Esophagus muscularis mucosa (tissue), 4 donors: ENCODE measurements at regions of chr2 and their contacts with region 1.

Region 1: DNA sequence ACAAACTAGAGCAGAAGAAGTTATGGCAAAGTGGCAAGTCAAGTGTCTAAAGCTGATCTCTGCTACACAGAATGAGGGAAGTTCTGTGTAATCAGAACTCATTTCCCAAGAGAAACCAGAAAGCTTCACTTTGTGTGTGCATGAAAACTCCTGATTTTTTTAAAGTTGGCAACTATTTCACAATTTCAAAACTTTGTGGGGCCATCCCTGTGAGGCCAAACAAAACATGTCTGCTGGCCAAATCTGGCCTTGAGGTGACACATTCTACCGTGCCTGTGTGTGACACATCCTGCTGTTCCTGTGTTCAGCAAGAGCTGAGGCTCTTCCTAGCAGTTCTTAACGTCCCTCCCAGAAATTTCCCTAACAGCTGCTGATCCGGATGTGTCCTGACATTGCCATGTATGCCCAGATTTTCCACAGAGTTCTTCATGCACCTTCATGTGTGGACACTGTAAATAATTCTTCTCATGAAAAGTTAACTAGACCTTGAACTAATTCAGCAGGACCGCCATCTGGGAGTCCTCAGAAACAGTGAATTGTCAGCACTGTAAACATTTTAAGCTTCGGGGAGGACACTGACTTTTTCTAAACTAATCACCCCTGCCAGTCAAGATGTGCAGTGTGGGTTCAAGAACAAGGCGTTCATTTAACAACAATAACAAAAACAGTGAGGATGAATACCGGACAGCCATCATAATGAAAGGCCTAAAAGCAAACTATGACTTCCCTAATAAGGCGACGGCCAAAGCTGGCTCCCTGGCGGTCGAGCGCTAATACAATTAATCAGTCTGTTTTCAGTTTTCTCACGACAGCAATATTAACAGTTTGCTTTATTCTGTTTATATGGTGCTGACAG is 99.0 kb downstream of the PLEKHM3 start:
- DNase-seq: peak; percentile 93
- H3K4me3 ChIP-seq: peak overlapping the region; percentile 1 to 26 (median 23)
- H3K27ac ChIP-seq: peak overlapping the region; percentile 72 to 80 (median 74)
- H3K4me1 ChIP-seq: peaks cover 13 to 36% (median 33%) of the 10 kb centered on the region in 4 donors
- H3K27me3 ChIP-seq: no peaks in the 10 kb centered on the region
- CTCF ChIP-seq: no peak
- EP300 ChIP-seq: peak; percentile 1
- POLR2A ChIP-seq: no peak

Region 2: DNA sequence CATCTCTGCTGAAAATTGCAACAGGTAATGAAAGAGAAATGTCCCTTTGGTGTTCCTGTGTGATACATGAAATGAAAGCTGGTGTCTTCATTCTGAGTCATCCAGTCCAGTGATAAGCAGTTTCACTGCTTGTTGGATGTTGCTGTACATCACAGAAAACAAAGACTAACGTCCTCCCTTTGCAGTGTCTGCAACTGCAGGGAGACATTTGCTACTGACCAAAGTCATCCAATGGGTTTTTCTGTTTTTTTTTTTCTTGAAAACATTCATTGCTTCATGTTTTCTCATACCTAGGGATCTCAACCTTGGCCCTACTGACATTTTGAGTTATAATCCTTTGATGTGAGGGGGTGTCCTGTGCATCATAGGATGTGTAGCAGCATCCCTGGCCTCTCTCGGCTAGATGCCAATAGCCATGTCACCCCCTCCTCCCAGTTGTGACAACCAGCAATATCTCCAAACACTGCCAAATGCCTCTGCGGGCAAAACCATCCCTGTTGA is 93.1 kb before region 1 on chr2:
- intact Hi-C with region 1: loop called (anchors 10 kb)
- DNase-seq: no peak
- H3K4me3 ChIP-seq: no peak overlapping the region
- H3K27ac ChIP-seq: no peak overlapping the region
- H3K4me1 ChIP-seq: peaks cover 21 to 32% (median 27%) of the 10 kb centered on the region in 4 donors
- H3K27me3 ChIP-seq: no peaks in the 10 kb centered on the region
- CTCF ChIP-seq: no peak
- EP300 ChIP-seq: no peak
- POLR2A ChIP-seq: no peak

Region 3: GRCh38 chr2:207993151-207993763 is 66.9 kb after region 1 on chr2:
- intact Hi-C with region 1: no loop called
- DNase-seq: no peak
- H3K4me3 ChIP-seq: no peak overlapping the region
- H3K27ac ChIP-seq: no peak overlapping the region
- H3K4me1 ChIP-seq: peaks cover 0 to 8% (median 5%) of the 10 kb centered on the region in 4 donors
- H3K27me3 ChIP-seq: no peaks in the 10 kb centered on the region
- CTCF ChIP-seq: no peak
- EP300 ChIP-seq: no peak
- POLR2A ChIP-seq: no peak